T-cell (primary cell): ENCODE measurements at regions of chr6 and their contacts with region 1.

Region 1: DNA sequence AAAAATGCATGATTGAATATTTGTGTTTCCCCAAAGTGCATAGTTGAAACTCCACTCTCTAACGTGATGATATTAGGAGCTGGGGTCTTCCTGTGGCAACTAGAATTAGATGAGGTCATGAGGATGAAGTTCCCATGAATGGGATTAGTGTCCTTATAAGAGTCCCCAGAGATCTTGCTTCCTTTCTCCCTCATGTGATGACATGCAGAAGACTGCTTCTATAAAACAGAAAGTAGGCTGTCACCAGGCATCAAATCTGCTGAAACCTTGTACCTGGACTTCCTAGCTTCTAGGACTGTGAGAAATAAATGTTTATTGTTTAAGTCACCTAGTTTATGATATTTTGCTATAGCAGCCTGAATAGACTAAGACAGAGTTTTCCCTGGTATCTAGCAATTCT is 586.5 kb upstream of the EPHA7 start:
- DNase-seq: no peak
- ATAC-seq: no peak
- H3K4me3 ChIP-seq: no peak overlapping the region
- H3K4me3 Mint-ChIP-seq: no peak overlapping the region
- H3K27ac ChIP-seq: no peak overlapping the region
- H3K27ac Mint-ChIP-seq: no peak overlapping the region
- H3K4me1 ChIP-seq: no peaks in the 10 kb centered on the region
- H3K4me1 Mint-ChIP-seq: no peaks in the 10 kb centered on the region
- H3K27me3 ChIP-seq: no peaks in the 10 kb centered on the region
- H3K27me3 Mint-ChIP-seq: no peaks in the 10 kb centered on the region

Region 2: GRCh38 chr6:93886416-93886815 is 119.4 kb before region 1 on chr6:
- CTCF ChIA-PET with region 1: interaction called in 1 of 2 experiments, 14 read pairs
- POLR2A ChIA-PET with region 1: no interaction called
- DNase-seq: no peak
- ATAC-seq: no peak
- H3K4me3 ChIP-seq: no peak overlapping the region
- H3K4me3 Mint-ChIP-seq: no peak overlapping the region
- H3K27ac ChIP-seq: no peak overlapping the region
- H3K27ac Mint-ChIP-seq: no peak overlapping the region
- H3K4me1 ChIP-seq: no peaks in the 10 kb centered on the region
- H3K4me1 Mint-ChIP-seq: no peaks in the 10 kb centered on the region
- H3K27me3 ChIP-seq: no peaks in the 10 kb centered on the region
- H3K27me3 Mint-ChIP-seq: no peaks in the 10 kb centered on the region

Region 3: GRCh38 chr6:94045099-94045829 is 39.4 kb after region 1 on chr6:
- CTCF ChIA-PET with region 1: no interaction called
- POLR2A ChIA-PET with region 1: no interaction called
- DNase-seq: no peak
- ATAC-seq: no peak
- H3K4me3 ChIP-seq: no peak overlapping the region
- H3K4me3 Mint-ChIP-seq: no peak overlapping the region
- H3K27ac ChIP-seq: no peak overlapping the region
- H3K27ac Mint-ChIP-seq: no peak overlapping the region
- H3K4me1 ChIP-seq: no peaks in the 10 kb centered on the region
- H3K4me1 Mint-ChIP-seq: no peaks in the 10 kb centered on the region
- H3K27me3 ChIP-seq: no peaks in the 10 kb centered on the region
- H3K27me3 Mint-ChIP-seq: no peaks in the 10 kb centered on the region